K562 (cell line): ENCODE measurements at regions of chr13 and their contacts with region 1.

Region 1: GRCh38 chr13:69579351-69579750 is 528.3 kb upstream of the ATXN8OS start:
- DNase-seq: peak in 1 of 4 experiments; percentile 2
- ATAC-seq: no peak
- H3K4me3 ChIP-seq: no peak overlapping the region
- H3K27ac ChIP-seq: no peak overlapping the region
- H3K4me1 ChIP-seq: no peaks in the 10 kb centered on the region
- H3K27me3 ChIP-seq: no peaks in the 10 kb centered on the region
- CTCF ChIP-seq: no peak
- EP300 ChIP-seq: no peak
- POLR2A ChIP-seq: no peak
- RAD21 ChIP-seq: peak in 1 of 2 experiments; percentile 56; a peak in 3 of 4 replicates

Region 2: DNA sequence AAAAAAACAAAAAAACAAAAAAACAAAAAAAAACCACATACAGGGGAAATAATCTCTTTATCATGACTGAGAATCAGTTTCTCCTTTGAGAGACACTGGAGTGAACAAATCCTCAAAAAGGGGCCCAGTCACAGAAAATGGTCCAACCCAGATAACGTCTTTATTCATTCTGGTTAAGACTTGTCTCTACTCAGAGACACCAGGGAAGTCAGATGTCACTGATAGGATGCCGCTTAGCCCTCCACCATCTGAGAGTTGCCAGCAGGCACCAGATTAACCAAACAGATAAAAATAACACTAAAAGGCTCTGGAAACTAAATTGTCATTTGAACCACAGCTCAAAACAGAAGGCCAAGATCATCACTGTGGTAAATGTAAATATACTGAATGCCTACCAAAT is 635.1 kb before region 1 on chr13:
- CTCF ChIA-PET with region 1: no interaction called
- POLR2A ChIA-PET with region 1: no interaction called
- in situ Hi-C with region 1: no loop called
- intact Hi-C with region 1: no loop called
- DNase-seq: no peak
- ATAC-seq: no peak
- H3K4me3 ChIP-seq: no peak overlapping the region
- H3K27ac ChIP-seq: no peak overlapping the region
- H3K4me1 ChIP-seq: no peaks in the 10 kb centered on the region
- H3K27me3 ChIP-seq: no peaks in the 10 kb centered on the region
- CTCF ChIP-seq: no peak
- EP300 ChIP-seq: no peak
- POLR2A ChIP-seq: no peak
- RAD21 ChIP-seq: no peak

Region 3: GRCh38 chr13:69828527-69828926 is 249.2 kb after region 1 on chr13:
- CTCF ChIA-PET with region 1: no interaction called
- POLR2A ChIA-PET with region 1: no interaction called
- in situ Hi-C with region 1: loop called (anchors 25 kb)
- intact Hi-C with region 1: no loop called
- DNase-seq: no peak
- ATAC-seq: no peak
- H3K4me3 ChIP-seq: no peak overlapping the region
- H3K27ac ChIP-seq: no peak overlapping the region
- H3K4me1 ChIP-seq: no peaks in the 10 kb centered on the region
- H3K27me3 ChIP-seq: no peaks in the 10 kb centered on the region
- CTCF ChIP-seq: no peak
- EP300 ChIP-seq: no peak
- POLR2A ChIP-seq: no peak
- RAD21 ChIP-seq: no peak

Region 4: GRCh38 chr13:69857183-69857821 is 278.0 kb after region 1 on chr13:
- CTCF ChIA-PET with region 1: no interaction called
- POLR2A ChIA-PET with region 1: no interaction called
- in situ Hi-C with region 1: no loop called
- intact Hi-C with region 1: loop called (anchors 2 kb)
- DNase-seq: peak; percentile 5 to 52 (median 16)
- ATAC-seq: 0 out of 3 replicates have a peak, but pooled peaks have one; percentile 47
- H3K4me3 ChIP-seq: no peak overlapping the region
- H3K27ac ChIP-seq: no peak overlapping the region
- H3K4me1 ChIP-seq: no peaks in the 10 kb centered on the region
- H3K27me3 ChIP-seq: no peaks in the 10 kb centered on the region
- CTCF ChIP-seq: peak in 2 of 3 experiments; percentile 35 to 40; a peak in 3 of 6 replicates
- EP300 ChIP-seq: no peak
- POLR2A ChIP-seq: no peak
- RAD21 ChIP-seq: peak; percentile 37 to 73